ENCODE measurements at regions of chr11 and their contacts with region 1.

Region 1: GRCh38 chr11:130145975-130146776 is 13.4 kb upstream of the ST14 start:
- DNase-seq: peak; percentile 90
- ATAC-seq: peak; percentile 99
- H3K4me3 Mint-ChIP-seq: peak overlapping the region; percentile 24
- H3K27ac Mint-ChIP-seq: peak overlapping the region; percentile 98
- H3K4me1 Mint-ChIP-seq: peaks cover 26% of the 10 kb centered on the region
- H3K27me3 Mint-ChIP-seq: no peaks in the 10 kb centered on the region
- CTCF ChIP-seq: no peak

Region 2: DNA sequence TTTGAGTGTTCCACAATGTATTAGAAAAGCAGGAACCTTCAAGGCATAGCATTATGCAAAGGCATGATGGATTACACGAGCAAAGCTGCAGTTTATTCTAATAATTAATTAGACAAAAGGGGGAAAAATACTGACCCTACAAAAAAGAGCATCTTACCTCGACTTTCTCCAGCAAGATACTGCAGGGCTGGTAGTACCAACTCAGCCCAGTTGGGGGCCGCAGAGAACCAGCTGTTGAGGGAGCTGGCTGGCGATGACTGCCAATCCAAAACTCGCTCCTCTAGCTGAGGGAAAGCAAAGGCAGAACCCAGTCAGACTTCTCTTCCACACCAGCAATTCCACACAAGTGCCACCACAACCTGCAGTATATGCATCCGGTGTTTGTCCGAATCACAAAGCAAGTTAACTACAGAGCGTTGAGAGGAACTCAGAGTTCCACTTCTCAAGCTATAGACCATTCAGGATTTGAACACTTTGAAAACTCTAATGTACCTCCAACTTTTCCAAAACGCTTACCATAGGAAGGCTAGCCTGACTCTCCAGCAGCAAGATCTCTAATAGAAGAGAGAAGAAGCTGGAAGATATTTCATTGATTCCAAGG is 264.5 kb before region 1 on chr11:
- CTCF ChIA-PET with region 1: interaction called, 17 read pairs
- POLR2A ChIA-PET with region 1: no interaction called
- DNase-seq: peak; percentile 74
- ATAC-seq: peak; percentile 88
- H3K4me3 Mint-ChIP-seq: no peak overlapping the region
- H3K27ac Mint-ChIP-seq: no peak overlapping the region; the same call in 1 of the 2 replicates
- H3K4me1 Mint-ChIP-seq: no peaks in the 10 kb centered on the region
- H3K27me3 Mint-ChIP-seq: no peaks in the 10 kb centered on the region
- CTCF ChIP-seq: peak; percentile 68

Region 3: DNA sequence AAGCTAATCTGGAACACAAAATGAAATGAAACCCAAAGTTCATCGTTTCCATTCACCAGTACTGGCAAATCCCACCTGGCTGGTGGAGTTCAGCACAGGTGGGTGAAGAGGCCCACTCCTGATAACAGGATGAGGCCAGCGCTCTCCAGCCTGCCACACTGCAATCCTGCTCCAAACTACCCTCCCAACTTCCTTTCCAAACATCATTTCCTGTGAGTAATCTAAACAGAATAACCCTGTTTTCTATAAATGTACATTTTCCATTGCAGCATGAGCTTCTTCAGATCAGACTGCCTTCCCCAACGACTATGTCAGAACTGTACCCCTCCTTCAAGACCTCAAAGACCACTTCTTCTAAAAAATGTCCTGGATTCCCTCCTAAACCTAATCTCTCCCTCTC is 234.9 kb before region 1 on chr11:
- CTCF ChIA-PET with region 1: interaction called, 10 read pairs
- POLR2A ChIA-PET with region 1: no interaction called
- DNase-seq: no peak
- ATAC-seq: no peak
- H3K4me3 Mint-ChIP-seq: no peak overlapping the region
- H3K27ac Mint-ChIP-seq: peak overlapping the region; percentile 17; the same call in 1 of the 2 replicates
- H3K4me1 Mint-ChIP-seq: peaks cover 7% of the 10 kb centered on the region; the same call in 1 of the 2 replicates
- H3K27me3 Mint-ChIP-seq: no peaks in the 10 kb centered on the region
- CTCF ChIP-seq: no peak

Region 4: DNA sequence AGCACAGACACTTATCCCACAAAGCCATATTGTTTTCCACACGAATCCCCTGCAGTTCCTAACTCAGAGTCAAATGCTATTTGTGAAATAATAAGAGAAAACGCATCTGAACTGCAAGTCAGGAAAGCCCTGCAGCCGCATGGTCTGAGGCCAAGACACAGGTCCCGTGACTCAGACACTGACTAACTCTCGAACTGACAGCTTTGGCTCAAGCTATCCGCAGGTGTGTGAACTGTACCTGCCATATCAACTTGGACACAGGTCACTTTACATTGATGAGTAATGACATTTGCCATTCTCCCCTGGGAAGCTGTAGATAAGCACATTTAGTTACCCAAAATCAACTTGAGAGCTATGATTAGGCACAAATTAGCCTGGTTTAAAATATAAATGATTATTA is 215.9 kb before region 1 on chr11:
- CTCF ChIA-PET with region 1: interaction called, 10 read pairs
- POLR2A ChIA-PET with region 1: no interaction called
- DNase-seq: no peak
- ATAC-seq: no peak
- H3K4me3 Mint-ChIP-seq: no peak overlapping the region
- H3K27ac Mint-ChIP-seq: no peak overlapping the region
- H3K4me1 Mint-ChIP-seq: peaks cover 30% of the 10 kb centered on the region
- H3K27me3 Mint-ChIP-seq: no peaks in the 10 kb centered on the region
- CTCF ChIP-seq: no peak

Region 5: GRCh38 chr11:130159657-130160497 is 13.7 kb after region 1 on chr11 and contains the start of gene ST14:
- CTCF ChIA-PET with region 1: interaction called, 34 read pairs
- POLR2A ChIA-PET with region 1: interaction called, 10 read pairs
- DNase-seq: peak; percentile 61
- ATAC-seq: peak; percentile 62
- H3K4me3 Mint-ChIP-seq: peak within 1 kb of the TSS; percentile 79
- H3K27ac Mint-ChIP-seq: no peak within 1 kb of the TSS
- H3K4me1 Mint-ChIP-seq: peaks cover 46% of the 10 kb centered on the region
- H3K27me3 Mint-ChIP-seq: peaks cover 55% of the 10 kb centered on the region
- CTCF ChIP-seq: no peak
- total RNA-seq, gene ST14: 27.5 to 33.9 TPM (median 27.8 TPM) in 3 replicates